B cell (primary cell): ENCODE measurements at regions of chr22 and their contacts with region 1.

Region 1: GRCh38 chr22:41501209-41501608 is 32.3 kb downstream of the ACO2 start:
- DNase-seq: peak; percentile 71
- ATAC-seq: peak; percentile 88
- H3K4me3 ChIP-seq: no peak overlapping the region
- H3K4me3 Mint-ChIP-seq: peak overlapping the region; percentile 23
- H3K27ac ChIP-seq: peak overlapping the region in 1 of 2 donors; percentile 10
- H3K27ac Mint-ChIP-seq: peak overlapping the region; percentile 86
- H3K4me1 ChIP-seq: peaks cover 0 to 31% of the 10 kb centered on the region in 2 donors
- H3K4me1 Mint-ChIP-seq: peaks cover 35% of the 10 kb centered on the region
- H3K27me3 ChIP-seq: no peaks in the 10 kb centered on the region
- H3K27me3 Mint-ChIP-seq: no peaks in the 10 kb centered on the region
- CTCF ChIP-seq: peak; percentile 61

Region 2: GRCh38 chr22:41301105-41302020 is 199.8 kb before region 1 on chr22 and contains the start of gene ZC3H7B:
- CTCF ChIA-PET with region 1: no interaction called
- POLR2A ChIA-PET with region 1: no interaction called
- intact Hi-C with region 1: no loop called
- DNase-seq: peak; percentile 94
- ATAC-seq: peak; percentile 92
- H3K4me3 ChIP-seq: peak within 1 kb of the TSS; percentile 59 to 95 (median 86)
- H3K4me3 Mint-ChIP-seq: peak within 1 kb of the TSS; percentile 86
- H3K27ac ChIP-seq: peak within 1 kb of the TSS; percentile 73 to 84
- H3K27ac Mint-ChIP-seq: peak within 1 kb of the TSS; percentile 75
- H3K4me1 ChIP-seq: peaks cover 13 to 17% of the 10 kb centered on the region in 2 donors
- H3K4me1 Mint-ChIP-seq: peaks cover 28% of the 10 kb centered on the region
- H3K27me3 ChIP-seq: no peaks in the 10 kb centered on the region
- H3K27me3 Mint-ChIP-seq: no peaks in the 10 kb centered on the region
- CTCF ChIP-seq: peak; percentile 51
- total RNA-seq, gene ZC3H7B: 41.9 and 42.2 TPM in 2 replicates

Region 3: DNA sequence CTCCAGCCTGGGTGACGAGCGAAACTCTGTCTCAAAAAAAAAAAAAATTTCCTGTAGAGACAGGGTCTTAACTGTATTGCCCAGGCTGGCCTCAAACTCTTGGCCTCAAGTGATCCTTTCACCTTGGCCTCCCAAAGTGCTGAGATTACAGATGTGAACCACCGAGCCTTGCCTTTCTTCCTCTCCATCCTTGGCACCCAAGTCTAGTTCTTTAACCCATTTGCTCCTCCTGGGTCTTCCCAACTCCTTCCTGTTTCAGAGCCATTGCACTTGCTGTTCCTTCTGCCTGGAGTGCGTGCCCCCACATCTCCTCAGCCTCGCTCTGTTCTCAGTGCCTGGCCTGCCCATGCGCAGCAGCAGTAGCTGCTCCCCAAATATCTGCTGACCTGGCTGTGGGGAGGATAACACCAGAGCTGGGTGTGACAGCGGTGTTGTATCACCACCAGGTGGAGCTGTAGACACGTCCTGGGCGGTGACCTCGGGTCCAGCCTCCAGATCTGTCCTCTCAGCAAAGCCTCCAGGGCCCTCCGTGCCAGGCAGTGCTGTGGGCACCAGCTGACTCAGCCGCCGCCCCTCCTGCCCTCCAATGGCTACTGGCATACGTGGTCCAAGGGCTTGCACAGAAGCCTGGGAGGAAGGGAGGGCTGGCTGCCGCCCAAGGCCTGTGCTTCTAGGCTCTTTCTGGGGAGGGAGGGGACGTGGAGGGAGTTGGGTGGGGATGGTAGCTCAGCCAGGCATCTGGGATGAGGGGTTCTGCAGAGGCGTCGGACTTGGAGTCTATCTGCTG is 97.5 kb before region 1 on chr22:
- CTCF ChIA-PET with region 1: interaction called, 140 read pairs
- POLR2A ChIA-PET with region 1: interaction called, 9 read pairs
- intact Hi-C with region 1: loop called (anchors 1 kb)
- DNase-seq: peak; percentile 89
- ATAC-seq: peak; percentile 87
- H3K4me3 ChIP-seq: no peak overlapping the region
- H3K4me3 Mint-ChIP-seq: no peak overlapping the region
- H3K27ac ChIP-seq: no peak overlapping the region
- H3K27ac Mint-ChIP-seq: peak overlapping the region; percentile 15
- H3K4me1 ChIP-seq: peaks cover 8 to 30% of the 10 kb centered on the region in 2 donors
- H3K4me1 Mint-ChIP-seq: peaks cover 31% of the 10 kb centered on the region
- H3K27me3 ChIP-seq: no peaks in the 10 kb centered on the region
- H3K27me3 Mint-ChIP-seq: no peaks in the 10 kb centered on the region
- CTCF ChIP-seq: peak; percentile 94

Region 4: DNA sequence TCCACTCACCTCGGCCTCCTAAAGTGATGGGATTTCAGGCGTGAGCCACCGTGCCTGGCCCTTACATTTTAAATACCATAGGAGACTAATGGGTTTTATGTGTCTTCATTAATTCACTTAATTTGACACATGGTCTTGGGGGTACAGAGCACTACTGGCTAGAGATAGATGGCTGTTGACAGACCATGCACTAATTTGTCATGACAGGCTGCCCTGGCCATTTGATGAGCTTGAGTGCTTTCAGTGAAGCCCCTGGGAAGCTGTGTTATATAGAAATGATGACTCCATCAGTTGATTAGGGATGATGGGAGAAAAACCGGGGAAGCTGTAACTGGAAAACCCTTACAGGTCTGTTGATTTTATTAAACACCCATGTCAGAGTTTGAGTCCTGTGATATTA is 39.3 kb before region 1 on chr22:
- CTCF ChIA-PET with region 1: interaction called, 13 read pairs
- POLR2A ChIA-PET with region 1: no interaction called
- intact Hi-C with region 1: loop called (anchors 5 kb)
- DNase-seq: no peak
- ATAC-seq: no peak
- H3K4me3 ChIP-seq: no peak overlapping the region
- H3K4me3 Mint-ChIP-seq: no peak overlapping the region
- H3K27ac ChIP-seq: no peak overlapping the region
- H3K27ac Mint-ChIP-seq: no peak overlapping the region
- H3K4me1 ChIP-seq: no peaks in the 10 kb centered on the region
- H3K4me1 Mint-ChIP-seq: peaks cover 11% of the 10 kb centered on the region
- H3K27me3 ChIP-seq: no peaks in the 10 kb centered on the region
- H3K27me3 Mint-ChIP-seq: no peaks in the 10 kb centered on the region
- CTCF ChIP-seq: no peak

Region 5: GRCh38 chr22:41479671-41480396 is 21.4 kb before region 1 on chr22:
- CTCF ChIA-PET with region 1: interaction called, 32 read pairs
- POLR2A ChIA-PET with region 1: interaction called, 17 read pairs
- intact Hi-C with region 1: loop called (anchors 2 kb)
- DNase-seq: no peak
- ATAC-seq: no peak
- H3K4me3 ChIP-seq: peak overlapping the region in 4 of 5 experiments; percentile 0 to 25 (median 12)
- H3K4me3 Mint-ChIP-seq: peak overlapping the region; percentile 76
- H3K27ac ChIP-seq: peak overlapping the region; percentile 82 to 86
- H3K27ac Mint-ChIP-seq: peak overlapping the region; percentile 95
- H3K4me1 ChIP-seq: peaks cover 84 to 95% of the 10 kb centered on the region in 2 donors
- H3K4me1 Mint-ChIP-seq: peaks cover 77% of the 10 kb centered on the region
- H3K27me3 ChIP-seq: no peaks in the 10 kb centered on the region
- H3K27me3 Mint-ChIP-seq: no peaks in the 10 kb centered on the region
- CTCF ChIP-seq: no peak

Region 6: DNA sequence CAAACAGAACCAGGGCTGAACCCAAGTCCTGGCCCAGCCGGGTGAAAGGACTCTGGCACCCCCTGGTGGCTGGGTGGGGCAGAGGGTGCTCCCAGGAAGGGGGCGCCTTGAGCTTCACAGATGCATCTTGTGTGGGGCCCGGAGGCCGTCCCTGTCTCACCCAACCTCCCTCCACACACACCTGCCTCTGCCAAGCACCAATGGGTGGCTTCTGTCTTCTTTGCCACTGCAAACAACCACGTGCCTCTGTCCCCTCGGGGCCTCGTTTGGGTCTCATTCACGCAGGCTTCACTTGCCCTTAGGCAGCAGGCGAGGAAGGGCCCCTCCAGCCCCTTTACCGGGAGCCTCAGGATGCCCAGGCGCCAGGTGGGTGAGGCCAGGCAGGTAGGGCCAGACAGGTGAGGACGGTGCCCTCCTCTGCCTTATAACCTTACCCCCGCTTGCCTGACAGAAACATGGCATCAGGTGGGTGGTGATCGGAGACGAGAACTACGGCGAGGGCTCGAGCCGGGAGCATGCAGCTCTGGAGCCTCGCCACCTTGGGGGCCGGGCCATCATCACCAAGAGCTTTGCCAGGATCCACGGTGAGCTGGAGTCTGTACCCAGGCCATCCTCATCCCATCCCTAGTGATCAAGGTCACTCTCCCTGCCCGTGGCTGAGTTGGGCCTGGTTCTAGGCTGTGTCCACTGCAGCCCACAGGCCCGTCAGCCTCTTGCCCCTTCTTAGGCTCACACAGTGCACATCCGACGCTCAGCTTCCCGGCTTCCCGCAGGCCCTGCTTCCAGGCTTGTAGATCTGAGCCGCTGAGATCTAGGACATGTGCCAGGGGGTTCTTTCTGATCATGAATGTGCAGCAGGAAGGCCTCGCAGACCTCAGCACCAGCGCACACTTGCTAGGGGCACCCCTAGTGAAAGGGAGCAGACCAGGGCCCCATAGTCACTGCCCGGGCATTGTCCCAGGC is 25.9 kb after region 1 on chr22:
- CTCF ChIA-PET with region 1: interaction called, 21 read pairs
- POLR2A ChIA-PET with region 1: no interaction called
- intact Hi-C with region 1: no loop called
- DNase-seq: peak; percentile 78
- ATAC-seq: peak; percentile 81
- H3K4me3 ChIP-seq: no peak overlapping the region
- H3K4me3 Mint-ChIP-seq: no peak overlapping the region
- H3K27ac ChIP-seq: no peak overlapping the region
- H3K27ac Mint-ChIP-seq: peak overlapping the region; percentile 74
- H3K4me1 ChIP-seq: peaks cover 7 to 12% of the 10 kb centered on the region in 2 donors
- H3K4me1 Mint-ChIP-seq: peaks cover 15% of the 10 kb centered on the region
- H3K27me3 ChIP-seq: no peaks in the 10 kb centered on the region
- H3K27me3 Mint-ChIP-seq: no peaks in the 10 kb centered on the region
- CTCF ChIP-seq: peak; percentile 90

Region 7: DNA sequence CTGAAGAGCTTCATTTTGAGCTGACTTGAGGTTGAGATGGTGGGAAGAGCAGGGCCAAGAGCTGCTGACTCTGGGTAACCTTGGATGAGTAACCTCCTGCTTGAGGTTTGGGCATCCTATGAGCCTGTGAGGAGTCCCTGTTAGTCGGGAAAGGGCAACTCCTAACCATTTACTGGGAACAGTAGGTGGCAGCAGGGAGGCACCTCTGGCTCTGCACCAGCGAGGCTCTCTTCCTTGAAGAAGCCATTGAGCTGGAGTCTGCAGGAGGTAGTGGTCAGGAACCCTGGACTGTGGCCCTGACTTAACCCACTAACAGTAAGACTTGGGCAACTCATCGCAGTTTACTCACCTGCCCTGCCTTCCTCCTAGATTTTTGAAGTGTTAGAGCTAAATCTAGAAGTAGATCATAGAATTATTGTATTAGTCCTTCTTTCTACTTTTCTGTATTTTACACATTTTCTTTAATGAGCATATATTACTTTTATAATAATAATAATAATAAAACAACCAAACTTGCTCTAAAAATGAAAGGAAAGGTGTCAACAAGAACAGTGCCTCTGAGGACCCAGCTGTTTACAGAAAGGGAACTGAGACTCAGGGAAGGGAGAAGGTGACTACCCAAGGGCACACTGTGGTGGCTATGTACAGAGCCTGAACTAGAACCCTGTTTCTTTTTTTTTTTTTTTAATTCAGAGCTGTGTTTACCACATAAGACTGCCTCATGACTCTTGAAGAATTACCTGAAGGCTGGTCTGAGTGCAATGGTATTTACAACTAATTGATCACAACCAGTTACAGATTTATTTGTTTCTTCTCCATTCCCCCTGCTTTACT is 245.6 kb after region 1 on chr22:
- CTCF ChIA-PET with region 1: no interaction called
- POLR2A ChIA-PET with region 1: no interaction called
- intact Hi-C with region 1: no loop called
- DNase-seq: peak; percentile 73
- ATAC-seq: peak; percentile 96
- H3K4me3 ChIP-seq: peak overlapping the region in 1 of 5 experiments; percentile 26
- H3K4me3 Mint-ChIP-seq: peak overlapping the region; percentile 63
- H3K27ac ChIP-seq: peak overlapping the region; percentile 50 to 62
- H3K27ac Mint-ChIP-seq: peak overlapping the region; percentile 80
- H3K4me1 ChIP-seq: peaks cover 30 to 32% of the 10 kb centered on the region in 2 donors
- H3K4me1 Mint-ChIP-seq: peaks cover 32% of the 10 kb centered on the region
- H3K27me3 ChIP-seq: no peaks in the 10 kb centered on the region
- H3K27me3 Mint-ChIP-seq: no peaks in the 10 kb centered on the region
- CTCF ChIP-seq: peak; percentile 40